ENCODE measurements at regions of chr16 and their contacts with region 1.

Region 1: DNA sequence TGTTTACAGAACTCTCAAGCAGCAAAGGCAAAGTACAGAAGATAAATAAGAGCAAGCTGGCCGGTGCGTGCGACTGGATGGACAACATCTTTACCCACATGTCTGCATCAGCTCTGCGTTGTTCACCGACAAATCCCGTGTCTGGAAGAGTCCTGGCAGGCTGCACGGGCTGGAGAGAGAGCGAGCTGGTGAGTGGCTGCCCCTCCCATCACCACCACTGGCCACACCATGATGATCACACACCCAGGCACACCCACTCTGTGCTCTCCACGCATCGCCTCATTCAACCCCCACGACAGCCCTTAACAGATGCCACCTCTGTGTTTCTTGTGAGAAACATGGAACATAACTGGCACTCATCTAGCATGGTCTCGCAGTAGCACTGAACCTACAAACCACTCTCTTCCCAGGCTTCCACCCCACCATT is 59.2 kb downstream of the ANKRD11 start:
- DNase-seq: no peak
- ATAC-seq: no peak
- H3K4me3 ChIP-seq: no peak overlapping the region
- H3K4me3 Mint-ChIP-seq: no peak overlapping the region
- H3K27ac ChIP-seq: peak overlapping the region; percentile 27
- H3K27ac Mint-ChIP-seq: no peak overlapping the region
- H3K4me1 ChIP-seq: peaks cover 66 to 67% of the 10 kb centered on the region in 2 donors
- H3K4me1 Mint-ChIP-seq: peaks cover 12 to 41% (median 17%) of the 10 kb centered on the region in 7 donors
- H3K27me3 ChIP-seq: no peaks in the 10 kb centered on the region
- H3K27me3 Mint-ChIP-seq: no peaks in the 10 kb centered on the region

Region 2: DNA sequence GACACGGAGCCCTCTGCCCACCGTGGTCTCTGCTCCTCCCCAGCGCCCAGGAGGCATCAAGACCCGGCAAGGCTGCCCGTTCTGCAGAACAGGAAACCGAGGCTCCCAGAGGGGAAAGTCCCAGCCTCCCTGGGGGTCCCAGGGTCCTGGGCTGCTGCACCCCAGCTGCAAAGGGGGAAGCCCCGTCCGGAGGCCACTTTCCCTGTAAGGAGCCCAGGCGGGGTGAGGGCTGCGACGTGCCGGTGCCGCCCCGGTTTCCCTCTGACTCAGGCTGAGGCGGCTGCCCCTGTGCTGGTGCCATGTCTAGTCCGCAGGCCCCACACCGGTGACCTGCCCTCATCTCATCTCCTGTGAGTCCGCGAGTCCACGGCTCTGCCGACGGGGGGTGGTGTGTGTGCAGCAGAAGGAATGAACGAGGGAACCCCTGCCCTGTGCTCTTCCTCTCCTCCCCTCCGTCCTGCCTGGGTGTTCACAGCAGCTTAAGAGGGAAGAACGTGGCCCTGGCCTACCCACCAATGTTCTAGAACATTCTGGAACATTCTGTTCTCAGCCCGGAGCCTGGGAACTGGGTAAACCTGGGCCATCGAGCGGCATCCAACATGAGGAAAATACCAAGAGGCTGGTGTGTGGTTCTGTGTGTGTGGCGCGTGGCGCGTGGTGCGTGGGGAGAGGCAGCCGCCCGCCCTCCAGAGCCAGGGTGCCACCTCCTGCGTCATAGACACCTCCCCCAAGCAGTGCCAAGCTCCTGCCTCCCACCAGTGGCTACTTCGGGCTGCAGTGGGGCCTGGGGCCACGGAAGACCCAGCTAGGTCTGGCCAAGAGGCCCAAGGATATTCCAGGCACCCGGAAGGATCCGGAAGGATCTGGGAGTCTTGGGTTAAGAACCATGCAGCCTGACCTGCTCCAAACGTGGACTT is 447.1 kb before region 1 on chr16:
- CTCF ChIA-PET with region 1: no interaction called
- POLR2A ChIA-PET with region 1: no interaction called
- intact Hi-C with region 1: no loop called
- DNase-seq: no peak
- ATAC-seq: no peak
- H3K4me3 ChIP-seq: no peak overlapping the region
- H3K4me3 Mint-ChIP-seq: no peak overlapping the region
- H3K27ac ChIP-seq: no peak overlapping the region
- H3K27ac Mint-ChIP-seq: no peak overlapping the region
- H3K4me1 ChIP-seq: no peaks in the 10 kb centered on the region
- H3K4me1 Mint-ChIP-seq: peaks cover 0 to 12% (median 3%) of the 10 kb centered on the region in 7 donors
- H3K27me3 ChIP-seq: no peaks in the 10 kb centered on the region
- H3K27me3 Mint-ChIP-seq: peaks cover 0 to 10% (median 0%) of the 10 kb centered on the region in 5 donors

Region 3: GRCh38 chr16:89282523-89282922 is 148.6 kb before region 1 on chr16:
- CTCF ChIA-PET with region 1: no interaction called
- POLR2A ChIA-PET with region 1: no interaction called
- intact Hi-C with region 1: no loop called
- DNase-seq: no peak
- ATAC-seq: no peak
- H3K4me3 ChIP-seq: no peak overlapping the region
- H3K4me3 Mint-ChIP-seq: no peak overlapping the region
- H3K27ac ChIP-seq: no peak overlapping the region
- H3K27ac Mint-ChIP-seq: no peak overlapping the region
- H3K4me1 ChIP-seq: no peaks in the 10 kb centered on the region
- H3K4me1 Mint-ChIP-seq: no peaks in the 10 kb centered on the region
- H3K27me3 ChIP-seq: no peaks in the 10 kb centered on the region
- H3K27me3 Mint-ChIP-seq: no peaks in the 10 kb centered on the region

Region 4: GRCh38 chr16:89409161-89409711 is 21.9 kb before region 1 on chr16:
- CTCF ChIA-PET with region 1: no interaction called
- POLR2A ChIA-PET with region 1: no interaction called
- intact Hi-C with region 1: no loop called
- DNase-seq: peak; percentile 25 to 85 (median 77)
- ATAC-seq: peak; percentile 90
- H3K4me3 ChIP-seq: no peak overlapping the region
- H3K4me3 Mint-ChIP-seq: peak overlapping the region; percentile 62 to 84 (median 78)
- H3K27ac ChIP-seq: peak overlapping the region; percentile 72
- H3K27ac Mint-ChIP-seq: peak overlapping the region; percentile 84 to 96 (median 94)
- H3K4me1 ChIP-seq: peaks cover 80 to 88% of the 10 kb centered on the region in 2 donors
- H3K4me1 Mint-ChIP-seq: peaks cover 75 to 95% (median 84%) of the 10 kb centered on the region in 7 donors
- H3K27me3 ChIP-seq: no peaks in the 10 kb centered on the region
- H3K27me3 Mint-ChIP-seq: no peaks in the 10 kb centered on the region

Region 5: DNA sequence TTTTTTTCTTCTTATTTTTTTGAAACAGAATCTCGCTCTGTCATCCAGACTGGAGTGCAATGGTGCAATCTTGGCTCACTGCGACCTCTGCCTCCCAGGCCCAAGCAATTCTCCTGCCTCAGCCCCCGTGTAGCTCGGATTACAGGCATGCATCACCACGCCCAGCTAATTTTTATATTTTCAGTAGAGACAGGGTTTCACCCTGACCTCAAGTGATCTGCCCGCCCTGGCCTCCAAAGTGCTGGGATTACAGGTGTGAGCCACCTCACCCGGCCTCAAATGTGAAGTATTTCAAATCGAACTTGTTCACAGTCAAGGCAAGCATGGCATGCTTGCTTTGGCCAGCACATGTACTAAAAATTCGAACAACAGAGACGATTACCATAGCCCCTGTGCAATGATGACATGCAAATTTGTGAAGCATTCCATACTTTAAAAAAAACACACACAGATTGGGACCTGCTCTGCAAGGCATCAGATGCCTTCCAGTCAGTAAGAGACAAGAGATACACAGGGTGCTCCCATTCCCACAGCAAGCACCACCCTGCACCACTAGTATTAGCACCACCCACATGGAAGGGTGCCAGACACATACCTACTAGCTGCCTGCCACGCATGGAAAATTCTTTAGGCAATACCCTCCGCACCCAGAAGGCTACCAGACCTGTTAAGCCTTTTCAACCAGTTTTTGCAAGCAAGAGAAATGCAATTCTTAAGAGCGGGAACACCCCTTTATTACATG is 12.0 kb after region 1 on chr16:
- CTCF ChIA-PET with region 1: interaction called, 4 read pairs
- POLR2A ChIA-PET with region 1: interaction called, 6 read pairs
- intact Hi-C with region 1: loop called in 1 of 2 experiments (anchors 1 kb)
- DNase-seq: peak in 2 of 9 donors; percentile 34 to 45
- ATAC-seq: no peak
- H3K4me3 ChIP-seq: no peak overlapping the region
- H3K4me3 Mint-ChIP-seq: peak overlapping the region; percentile 60 to 82 (median 78)
- H3K27ac ChIP-seq: peak overlapping the region; percentile 58
- H3K27ac Mint-ChIP-seq: peak overlapping the region; percentile 71 to 96 (median 81)
- H3K4me1 ChIP-seq: peaks cover 78 to 89% of the 10 kb centered on the region in 2 donors
- H3K4me1 Mint-ChIP-seq: peaks cover 0 to 93% (median 73%) of the 10 kb centered on the region in 7 donors
- H3K27me3 ChIP-seq: no peaks in the 10 kb centered on the region
- H3K27me3 Mint-ChIP-seq: no peaks in the 10 kb centered on the region